ENCODE measurements at regions of chr18 and their contacts with region 1.

Region 1: GRCh38 chr18:48834413-48835031 is 116.2 kb downstream of the SMAD7 start:
- DNase-seq: peak; percentile 75
- H3K4me3 Mint-ChIP-seq: peak overlapping the region; percentile 29
- H3K27ac Mint-ChIP-seq: peak overlapping the region; percentile 75
- H3K4me1 Mint-ChIP-seq: peaks cover 40% of the 10 kb centered on the region
- H3K27me3 Mint-ChIP-seq: no peaks in the 10 kb centered on the region
- CTCF ChIP-seq: no peak

Region 2: GRCh38 chr18:48529796-48530195 is 304.7 kb before region 1 on chr18:
- CTCF ChIA-PET with region 1: no interaction called
- intact Hi-C with region 1: no loop called
- DNase-seq: no peak
- H3K4me3 Mint-ChIP-seq: no peak overlapping the region
- H3K27ac Mint-ChIP-seq: no peak overlapping the region
- H3K4me1 Mint-ChIP-seq: no peaks in the 10 kb centered on the region
- H3K27me3 Mint-ChIP-seq: peaks cover 66% of the 10 kb centered on the region
- CTCF ChIP-seq: no peak

Region 3: DNA sequence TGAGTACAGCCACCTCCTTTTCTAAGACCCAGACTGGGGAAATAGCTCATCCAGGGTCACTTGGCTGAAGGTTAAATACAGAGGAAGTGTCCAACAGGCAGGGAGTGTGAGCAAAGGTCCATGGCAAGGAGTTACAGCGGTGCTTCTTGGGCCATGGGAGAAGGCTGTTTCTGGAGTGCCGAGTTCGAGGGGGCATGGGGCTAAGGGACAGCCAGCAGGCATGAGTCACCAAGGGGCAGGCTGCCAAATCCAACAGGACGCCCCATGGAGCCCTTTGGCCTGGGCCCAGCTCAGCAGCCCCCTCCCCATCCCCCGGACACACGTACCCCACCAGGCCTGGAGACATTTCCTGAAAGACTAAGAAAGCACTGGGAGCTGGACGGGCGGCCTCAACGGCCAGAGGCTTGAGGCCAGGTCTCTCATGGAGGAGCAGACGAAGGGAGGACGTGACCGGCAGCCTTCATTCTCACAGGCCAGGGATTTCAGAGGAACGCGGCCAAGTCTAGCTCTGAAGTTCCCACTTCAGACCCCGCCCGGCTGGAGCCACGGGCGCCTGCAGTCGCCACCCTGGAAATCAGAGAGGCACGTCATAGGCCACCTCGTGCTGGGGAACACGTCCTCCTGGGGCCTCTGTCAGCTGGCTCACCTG is 44.2 kb before region 1 on chr18:
- CTCF ChIA-PET with region 1: no interaction called
- intact Hi-C with region 1: no loop called
- DNase-seq: peak; percentile 28
- H3K4me3 Mint-ChIP-seq: no peak overlapping the region
- H3K27ac Mint-ChIP-seq: peak overlapping the region; percentile 42
- H3K4me1 Mint-ChIP-seq: peaks cover 12% of the 10 kb centered on the region
- H3K27me3 Mint-ChIP-seq: no peaks in the 10 kb centered on the region
- CTCF ChIP-seq: no peak

Region 4: GRCh38 chr18:48808476-48808875 is 26.0 kb before region 1 on chr18:
- CTCF ChIA-PET with region 1: interaction called, 4 read pairs
- intact Hi-C with region 1: loop called (anchors 2 kb)
- DNase-seq: no peak
- H3K4me3 Mint-ChIP-seq: no peak overlapping the region
- H3K27ac Mint-ChIP-seq: no peak overlapping the region
- H3K4me1 Mint-ChIP-seq: peaks cover 11% of the 10 kb centered on the region
- H3K27me3 Mint-ChIP-seq: no peaks in the 10 kb centered on the region
- CTCF ChIP-seq: no peak

Measured in Calu3 (cell line).